Gastrocnemius medialis (tissue), 4 donors: ENCODE measurements at regions of chrX and their contacts with region 1.

Region 1: DNA sequence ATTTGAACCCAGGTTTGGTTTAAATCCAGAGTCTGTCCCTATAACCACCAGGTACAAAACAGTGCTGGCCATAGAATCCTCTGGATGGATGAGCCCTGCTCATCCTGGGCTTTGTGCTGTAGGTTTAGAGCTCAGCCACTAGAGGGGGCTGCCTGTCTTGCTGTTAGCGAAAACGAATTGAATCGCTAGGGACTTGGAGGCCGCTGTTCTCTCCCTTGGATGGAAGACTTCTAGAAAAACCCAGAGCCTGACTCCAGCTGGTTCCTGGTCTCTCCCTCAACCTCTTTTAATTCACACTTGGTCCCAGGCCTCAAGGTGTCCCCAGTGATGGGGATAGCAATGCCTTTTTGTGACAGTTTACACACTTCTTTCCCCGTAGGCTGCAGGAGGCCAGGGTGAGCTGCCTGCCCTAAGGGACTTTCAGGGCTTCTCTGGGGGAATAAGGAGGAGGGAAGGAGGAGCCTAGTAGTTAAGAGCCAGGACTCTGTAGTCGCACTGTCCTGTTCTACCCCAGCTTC is 8.7 kb downstream of the RIPPLY1 start:
- DNase-seq: peak in 1 of 2 donors; percentile 26
- ATAC-seq: peak; percentile 84
- H3K4me3 ChIP-seq: no peak overlapping the region
- H3K27ac ChIP-seq: no peak overlapping the region
- H3K4me1 ChIP-seq: no peaks in the 10 kb centered on the region
- H3K27me3 ChIP-seq: peaks cover 0 to 7% (median 0%) of the 10 kb centered on the region in 3 donors
- CTCF ChIP-seq: peak; percentile 36 to 82 (median 70)
- POLR2A ChIP-seq: no peak

Region 2: GRCh38 chrX:106933041-106933961 is 38.9 kb after region 1 on chrX:
- in situ Hi-C with region 1: no loop called
- intact Hi-C with region 1: loop called (anchors 5 kb)
- DNase-seq: no peak
- ATAC-seq: no peak
- H3K4me3 ChIP-seq: no peak overlapping the region
- H3K27ac ChIP-seq: no peak overlapping the region
- H3K4me1 ChIP-seq: no peaks in the 10 kb centered on the region
- H3K27me3 ChIP-seq: no peaks in the 10 kb centered on the region
- CTCF ChIP-seq: no peak
- POLR2A ChIP-seq: no peak

Region 3: DNA sequence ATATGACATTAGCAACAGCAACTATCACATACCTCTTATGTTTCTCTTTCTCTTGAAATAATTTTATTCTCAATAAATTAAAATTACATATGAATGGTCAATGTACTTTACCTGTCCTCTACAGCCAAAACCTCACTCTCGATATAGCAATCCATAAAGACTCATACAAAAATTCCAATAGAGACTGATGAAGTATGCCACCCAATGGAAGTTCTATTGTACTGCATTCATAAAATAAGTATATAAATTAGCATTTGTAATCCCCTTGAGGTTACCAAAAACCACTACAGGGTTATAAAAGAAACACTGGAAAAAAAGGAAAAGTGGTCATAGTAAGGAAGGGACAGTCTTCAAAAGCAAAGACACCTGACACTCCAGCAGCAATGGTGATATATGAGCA is 58.5 kb after region 1 on chrX:
- in situ Hi-C with region 1: loop called in 1 of 4 experiments (anchors 10 kb)
- intact Hi-C with region 1: loop called (anchors 1 kb)
- DNase-seq: no peak
- ATAC-seq: no peak
- H3K4me3 ChIP-seq: no peak overlapping the region
- H3K27ac ChIP-seq: no peak overlapping the region
- H3K4me1 ChIP-seq: no peaks in the 10 kb centered on the region
- H3K27me3 ChIP-seq: no peaks in the 10 kb centered on the region
- CTCF ChIP-seq: peak; percentile 13 to 48 (median 33)
- POLR2A ChIP-seq: no peak